Naive thymus-derived CD4-positive, alpha-beta T cell (primary cell): ENCODE measurements at regions of chr11 and their contacts with region 1.

Region 1: GRCh38 chr11:34997952-34998528 is 81.6 kb downstream of the PDHX start:
- DNase-seq: peak in 6 of 9 donors; percentile 27 to 54 (median 44)
- ATAC-seq: peak; percentile 72
- H3K4me3 ChIP-seq: no peak overlapping the region
- H3K4me3 Mint-ChIP-seq: peak overlapping the region in 9 of 10 donors; percentile 6 to 81 (median 34)
- H3K27ac ChIP-seq: peak overlapping the region; percentile 8
- H3K27ac Mint-ChIP-seq: peak overlapping the region; percentile 15 to 90 (median 69)
- H3K4me1 ChIP-seq: peaks cover 15 to 19% of the 10 kb centered on the region in 2 donors
- H3K4me1 Mint-ChIP-seq: peaks cover 19 to 38% (median 35%) of the 10 kb centered on the region in 7 donors
- H3K27me3 ChIP-seq: no peaks in the 10 kb centered on the region
- H3K27me3 Mint-ChIP-seq: no peaks in the 10 kb centered on the region

Region 2: GRCh38 chr11:34926101-34926830 is 71.8 kb before region 1 on chr11:
- CTCF ChIA-PET with region 1: interaction called, 5 read pairs
- POLR2A ChIA-PET with region 1: no interaction called
- intact Hi-C with region 1: loop called (anchors 1 kb)
- DNase-seq: peak in 7 of 9 donors; percentile 18 to 61 (median 58)
- ATAC-seq: peak; percentile 80
- H3K4me3 ChIP-seq: no peak overlapping the region
- H3K4me3 Mint-ChIP-seq: no peak overlapping the region
- H3K27ac ChIP-seq: no peak overlapping the region
- H3K27ac Mint-ChIP-seq: peak overlapping the region in 1 of 9 donors; percentile 49
- H3K4me1 ChIP-seq: peaks cover 0 to 10% of the 10 kb centered on the region in 2 donors
- H3K4me1 Mint-ChIP-seq: peaks cover 10 to 54% (median 29%) of the 10 kb centered on the region in 7 donors
- H3K27me3 ChIP-seq: no peaks in the 10 kb centered on the region
- H3K27me3 Mint-ChIP-seq: no peaks in the 10 kb centered on the region

Region 3: GRCh38 chr11:35040221-35040942 is 42.3 kb after region 1 on chr11:
- CTCF ChIA-PET with region 1: interaction called, 3 read pairs
- POLR2A ChIA-PET with region 1: interaction called, 3 read pairs
- intact Hi-C with region 1: loop called (anchors 1 kb)
- DNase-seq: peak in 8 of 9 donors; percentile 53 to 89 (median 74)
- ATAC-seq: peak; percentile 88
- H3K4me3 ChIP-seq: peak overlapping the region; percentile 60
- H3K4me3 Mint-ChIP-seq: peak overlapping the region; percentile 74 to 94 (median 89)
- H3K27ac ChIP-seq: peak overlapping the region; percentile 86
- H3K27ac Mint-ChIP-seq: peak overlapping the region; percentile 90 to 99 (median 97)
- H3K4me1 ChIP-seq: peaks cover 29 to 45% of the 10 kb centered on the region in 2 donors
- H3K4me1 Mint-ChIP-seq: peaks cover 28 to 77% (median 68%) of the 10 kb centered on the region in 7 donors
- H3K27me3 ChIP-seq: no peaks in the 10 kb centered on the region
- H3K27me3 Mint-ChIP-seq: peaks cover 0 to 29% (median 0%) of the 10 kb centered on the region in 5 donors